Body of pancreas (tissue), 4 donors: ENCODE measurements at regions of chr11 and their contacts with region 1.

Region 1: GRCh38 chr11:32176223-32176934 is 85.5 kb downstream of the RCN1 start:
- DNase-seq: peak; percentile 77 to 86 (median 82)
- ATAC-seq: peak; percentile 60
- H3K4me3 ChIP-seq: no peak overlapping the region
- H3K27ac ChIP-seq: no peak overlapping the region
- H3K4me1 ChIP-seq: no peaks in the 10 kb centered on the region
- H3K27me3 ChIP-seq: no peaks in the 10 kb centered on the region
- CTCF ChIP-seq: peak; percentile 55 to 93 (median 85)
- POLR2A ChIP-seq: no peak

Region 2: GRCh38 chr11:31397239-31397834 is 779.0 kb before region 1 on chr11:
- intact Hi-C with region 1: loop called (anchors 10 kb)
- DNase-seq: no peak
- ATAC-seq: peak; percentile 48
- H3K4me3 ChIP-seq: no peak overlapping the region
- H3K27ac ChIP-seq: no peak overlapping the region
- H3K4me1 ChIP-seq: no peaks in the 10 kb centered on the region
- H3K27me3 ChIP-seq: no peaks in the 10 kb centered on the region
- CTCF ChIP-seq: peak; percentile 6 to 76 (median 55)
- POLR2A ChIP-seq: no peak

Region 3: DNA sequence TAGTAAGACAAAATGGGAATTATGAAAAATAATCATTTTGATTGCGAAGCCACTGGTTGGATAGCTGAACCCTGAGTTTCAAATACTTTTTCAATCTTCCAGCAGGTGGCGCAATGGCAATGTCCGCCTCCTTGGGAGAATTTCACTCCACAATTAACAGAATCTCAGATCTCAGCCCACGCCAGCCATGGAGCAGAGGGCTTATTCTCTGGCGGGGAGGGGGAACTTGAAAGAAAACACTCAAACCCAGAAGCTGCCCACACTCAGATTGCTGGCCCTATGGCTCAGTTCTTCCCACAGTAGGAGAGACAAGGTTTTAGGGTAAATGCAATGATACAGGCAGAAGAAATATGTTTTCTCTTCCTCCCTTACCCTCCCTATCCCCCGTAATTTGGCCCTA is 124.2 kb before region 1 on chr11:
- intact Hi-C with region 1: loop called (anchors 5 kb)
- DNase-seq: peak; percentile 47 to 56 (median 54)
- ATAC-seq: peak; percentile 30
- H3K4me3 ChIP-seq: no peak overlapping the region
- H3K27ac ChIP-seq: no peak overlapping the region
- H3K4me1 ChIP-seq: no peaks in the 10 kb centered on the region
- H3K27me3 ChIP-seq: no peaks in the 10 kb centered on the region
- CTCF ChIP-seq: peak; percentile 58 to 83 (median 71)
- POLR2A ChIP-seq: no peak

Region 4: GRCh38 chr11:32333320-32333991 is 157.1 kb after region 1 on chr11:
- intact Hi-C with region 1: no loop called
- DNase-seq: peak; percentile 75 to 81 (median 78)
- ATAC-seq: peak; percentile 91
- H3K4me3 ChIP-seq: peak overlapping the region in 1 of 2 donors; percentile 13
- H3K27ac ChIP-seq: peak overlapping the region in 1 of 4 donors; percentile 24
- H3K4me1 ChIP-seq: peaks cover 18% of the 10 kb centered on the region
- H3K27me3 ChIP-seq: no peaks in the 10 kb centered on the region
- CTCF ChIP-seq: peak in 6 of 7 experiments; percentile 23 to 53 (median 37)
- POLR2A ChIP-seq: peak in 1 of 3 donors; percentile 10